Pancreas (tissue), 10 donors: ENCODE measurements at regions of chr15 and their contacts with region 1.

Region 1: DNA sequence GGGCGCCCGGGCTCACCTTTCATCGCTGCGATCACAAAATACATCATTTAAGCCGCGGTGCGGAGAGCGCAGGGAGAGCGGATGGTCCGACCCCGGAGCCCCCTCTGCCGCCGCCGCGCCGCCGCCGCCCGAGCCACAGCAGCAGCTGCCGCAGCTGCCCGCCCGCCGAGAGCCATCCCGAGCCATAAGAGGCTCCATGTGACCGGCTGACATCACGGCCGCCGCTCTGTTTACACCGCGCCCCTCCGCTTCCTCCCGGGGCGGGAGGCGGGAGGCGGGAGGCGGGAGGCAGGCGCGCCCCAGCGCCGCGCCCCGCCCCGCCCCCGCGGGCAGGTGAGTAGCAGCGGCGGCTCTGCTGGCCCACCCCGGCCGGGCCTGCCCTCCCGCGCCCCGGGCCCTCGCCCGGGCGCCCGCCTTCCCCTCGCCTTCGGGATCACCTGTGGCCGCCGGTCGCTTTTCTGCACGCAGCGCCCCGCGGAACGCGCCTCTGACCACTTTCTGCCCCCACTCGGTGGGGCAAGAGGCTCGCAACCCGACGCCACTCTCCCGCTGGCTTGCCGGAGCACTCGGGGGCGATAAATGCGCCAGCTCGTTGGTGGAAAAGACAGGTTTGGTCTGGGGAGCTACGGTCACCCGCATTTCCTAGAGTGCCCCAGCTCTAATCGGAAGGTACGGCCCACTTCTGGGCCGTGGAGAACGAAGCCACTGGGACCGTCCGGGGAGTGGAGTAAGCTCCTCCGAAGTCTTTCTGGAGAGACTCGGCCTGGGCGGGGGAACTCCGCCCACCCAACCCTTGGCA is 113.6 kb upstream of the ICE2 start:
- DNase-seq: peak; percentile 88 to 96 (median 91)
- ATAC-seq: peak; percentile 80 to 89 (median 85)
- H3K4me3 ChIP-seq: peak overlapping the region; percentile 80 to 98 (median 90)
- H3K27ac ChIP-seq: peak overlapping the region; percentile 91 to 99 (median 97)
- H3K4me1 ChIP-seq: peaks cover 4 to 9% (median 7%) of the 10 kb centered on the region in 3 donors
- H3K27me3 ChIP-seq: no peaks in the 10 kb centered on the region
- CTCF ChIP-seq: no peak

Region 2: GRCh38 chr15:60115579-60116380 is 476.8 kb before region 1 on chr15:
- intact Hi-C with region 1: no loop called
- DNase-seq: no peak
- ATAC-seq: no peak
- H3K4me3 ChIP-seq: no peak overlapping the region
- H3K27ac ChIP-seq: no peak overlapping the region
- H3K4me1 ChIP-seq: no peaks in the 10 kb centered on the region
- H3K27me3 ChIP-seq: peaks cover 0 to 19% (median 5%) of the 10 kb centered on the region in 4 donors
- CTCF ChIP-seq: no peak

Region 3: GRCh38 chr15:60507596-60508424 is 84.8 kb before region 1 on chr15:
- intact Hi-C with region 1: no loop called
- DNase-seq: peak in 2 of 6 donors; percentile 21 to 58
- ATAC-seq: peak; percentile 69 to 96 (median 91)
- H3K4me3 ChIP-seq: no peak overlapping the region
- H3K27ac ChIP-seq: no peak overlapping the region
- H3K4me1 ChIP-seq: peaks cover 0 to 8% (median 4%) of the 10 kb centered on the region in 3 donors
- H3K27me3 ChIP-seq: no peaks in the 10 kb centered on the region
- CTCF ChIP-seq: peak; percentile 71 to 88 (median 80)

Region 4: GRCh38 chr15:60635507-60636352 is 43.2 kb after region 1 on chr15:
- intact Hi-C with region 1: no loop called
- DNase-seq: no peak
- ATAC-seq: no peak
- H3K4me3 ChIP-seq: no peak overlapping the region
- H3K27ac ChIP-seq: no peak overlapping the region
- H3K4me1 ChIP-seq: no peaks in the 10 kb centered on the region
- H3K27me3 ChIP-seq: no peaks in the 10 kb centered on the region
- CTCF ChIP-seq: no peak

Region 5: DNA sequence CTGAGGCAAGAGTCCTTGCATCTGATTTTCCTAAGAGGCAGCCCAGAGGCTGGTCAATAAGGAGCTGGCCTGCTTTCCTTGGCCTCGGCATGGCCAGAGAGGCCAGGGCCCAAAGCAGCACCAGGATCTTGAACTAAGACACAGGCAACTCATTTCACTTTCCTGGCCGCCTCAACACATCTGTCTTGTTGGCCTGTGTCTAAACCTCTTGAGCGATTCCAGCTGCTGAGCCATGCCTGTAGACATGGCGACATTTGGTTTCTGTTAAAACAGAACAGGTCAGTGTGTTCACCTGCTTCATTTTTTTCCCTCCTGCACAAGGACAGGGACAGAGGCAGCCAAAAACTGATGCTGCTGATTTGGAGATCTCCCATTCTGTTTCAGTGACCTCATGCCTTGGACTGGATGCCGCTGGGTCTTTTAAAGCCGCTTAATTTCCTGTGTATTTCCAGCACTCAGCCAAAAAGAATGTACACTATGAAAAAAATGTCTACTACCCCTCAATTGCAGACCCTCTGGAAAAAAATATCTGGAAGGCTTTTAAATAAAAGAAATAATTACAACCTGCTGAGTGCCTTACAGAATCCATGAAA is 153.0 kb after region 1 on chr15:
- intact Hi-C with region 1: no loop called
- DNase-seq: no peak
- ATAC-seq: peak in 2 of 4 donors; percentile 19 to 56
- H3K4me3 ChIP-seq: no peak overlapping the region
- H3K27ac ChIP-seq: no peak overlapping the region
- H3K4me1 ChIP-seq: no peaks in the 10 kb centered on the region
- H3K27me3 ChIP-seq: no peaks in the 10 kb centered on the region
- CTCF ChIP-seq: no peak

Region 6: GRCh38 chr15:60916679-60917460 is 324.3 kb after region 1 on chr15:
- intact Hi-C with region 1: loop called in 1 of 3 experiments (anchors 5 kb)
- DNase-seq: peak; percentile 79 to 87 (median 81)
- ATAC-seq: peak; percentile 74 to 90 (median 83)
- H3K4me3 ChIP-seq: peak overlapping the region in 1 of 4 donors; percentile 19
- H3K27ac ChIP-seq: peak overlapping the region; percentile 75 to 90 (median 87)
- H3K4me1 ChIP-seq: peaks cover 13 to 53% (median 53%) of the 10 kb centered on the region in 3 donors
- H3K27me3 ChIP-seq: no peaks in the 10 kb centered on the region
- CTCF ChIP-seq: peak; percentile 71 to 79 (median 75)